CD8-positive, alpha-beta T cell (primary cell): ENCODE measurements at regions of chr12 and their contacts with region 1.

Region 1: GRCh38 chr12:10001171-10001776 is 2.4 kb upstream of the CLEC1B start:
- DNase-seq: no peak
- ATAC-seq: no peak
- H3K4me3 ChIP-seq: no peak overlapping the region
- H3K4me3 Mint-ChIP-seq: no peak overlapping the region
- H3K27ac ChIP-seq: no peak overlapping the region
- H3K27ac Mint-ChIP-seq: no peak overlapping the region
- H3K4me1 ChIP-seq: no peaks in the 10 kb centered on the region
- H3K4me1 Mint-ChIP-seq: no peaks in the 10 kb centered on the region
- H3K27me3 ChIP-seq: no peaks in the 10 kb centered on the region
- H3K27me3 Mint-ChIP-seq: peaks cover 2% of the 10 kb centered on the region
- CTCF ChIP-seq: no peak

Region 2: DNA sequence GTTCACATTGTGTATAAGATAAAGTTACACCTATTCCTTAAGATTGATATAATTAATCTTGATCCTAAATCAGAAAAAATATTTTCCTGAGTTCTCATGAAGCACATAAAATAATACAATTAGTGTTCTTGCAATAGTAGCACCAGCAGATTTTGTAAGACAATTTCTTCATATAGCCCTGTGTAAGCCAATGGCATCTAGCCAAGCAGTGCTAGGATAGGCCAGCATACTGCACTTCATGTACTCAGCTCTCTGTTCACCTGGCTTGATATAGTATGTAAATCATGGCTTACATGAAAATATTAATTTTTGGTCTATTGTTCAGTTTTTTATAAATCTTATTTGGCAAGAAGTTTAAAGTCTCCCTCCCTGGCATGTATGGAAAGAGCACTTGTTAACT is 118.1 kb before region 1 on chr12:
- CTCF ChIA-PET with region 1: no interaction called
- POLR2A ChIA-PET with region 1: no interaction called
- intact Hi-C with region 1: no loop called
- DNase-seq: no peak
- ATAC-seq: no peak
- H3K4me3 ChIP-seq: no peak overlapping the region
- H3K4me3 Mint-ChIP-seq: no peak overlapping the region
- H3K27ac ChIP-seq: no peak overlapping the region
- H3K27ac Mint-ChIP-seq: no peak overlapping the region
- H3K4me1 ChIP-seq: no peaks in the 10 kb centered on the region
- H3K4me1 Mint-ChIP-seq: peaks cover 11% of the 10 kb centered on the region
- H3K27me3 ChIP-seq: no peaks in the 10 kb centered on the region
- H3K27me3 Mint-ChIP-seq: no peaks in the 10 kb centered on the region
- CTCF ChIP-seq: no peak

Region 3: GRCh38 chr12:10035569-10035968 is 34.3 kb after region 1 on chr12:
- CTCF ChIA-PET with region 1: no interaction called
- POLR2A ChIA-PET with region 1: no interaction called
- intact Hi-C with region 1: loop called in 1 of 2 experiments (anchors 5 kb)
- DNase-seq: no peak
- ATAC-seq: no peak
- H3K4me3 ChIP-seq: no peak overlapping the region
- H3K4me3 Mint-ChIP-seq: no peak overlapping the region
- H3K27ac ChIP-seq: no peak overlapping the region
- H3K27ac Mint-ChIP-seq: no peak overlapping the region
- H3K4me1 ChIP-seq: no peaks in the 10 kb centered on the region
- H3K4me1 Mint-ChIP-seq: no peaks in the 10 kb centered on the region
- H3K27me3 ChIP-seq: no peaks in the 10 kb centered on the region
- H3K27me3 Mint-ChIP-seq: peaks cover 4% of the 10 kb centered on the region
- CTCF ChIP-seq: no peak